ENCODE measurements at regions of chr3 and their contacts with region 1.

Region 1: DNA sequence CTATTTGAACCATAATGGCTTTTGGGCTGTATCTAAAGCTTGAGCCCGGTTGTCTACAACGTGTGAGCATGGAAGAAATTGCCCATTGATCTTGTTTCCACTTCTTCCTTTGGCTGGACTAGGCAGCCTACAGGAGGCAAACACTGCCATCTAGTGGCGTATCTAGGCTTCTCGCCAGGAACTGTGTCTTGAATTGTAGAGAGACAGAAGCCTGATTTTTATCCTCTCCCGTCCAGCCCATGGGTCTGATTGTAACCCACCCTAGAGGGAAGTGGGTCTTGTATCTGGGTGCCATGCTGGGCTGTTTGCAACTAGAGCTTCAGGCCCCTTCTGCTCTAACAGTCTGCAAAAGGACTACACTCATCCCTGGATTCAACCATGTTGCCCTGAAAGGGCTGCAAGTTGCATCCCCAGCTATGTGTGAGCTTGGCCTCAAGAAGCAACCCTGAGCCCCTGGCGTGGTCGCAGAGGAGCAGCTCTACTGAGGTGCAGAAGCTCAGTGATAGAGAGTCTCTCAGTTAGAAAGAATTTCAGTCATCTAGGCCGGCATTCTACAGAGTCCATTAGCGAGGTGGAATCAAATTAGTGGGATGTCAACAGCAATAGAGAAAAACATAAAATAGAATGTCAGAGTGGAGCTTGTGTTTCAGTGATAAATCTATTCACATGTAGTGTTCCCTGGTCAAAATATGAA is 170.2 kb upstream of the UMPS start:
- DNase-seq: peak; percentile 62
- H3K4me3 ChIP-seq: no peak overlapping the region
- H3K27ac ChIP-seq: no peak overlapping the region
- H3K27me3 ChIP-seq: peaks cover 13% of the 10 kb centered on the region
- CTCF ChIP-seq: peak; percentile 93

Region 2: GRCh38 chr3:124014366-124014942 is 545.6 kb before region 1 on chr3:
- CTCF ChIA-PET with region 1: interaction called, 17 read pairs
- POLR2A ChIA-PET with region 1: no interaction called
- DNase-seq: no peak
- H3K4me3 ChIP-seq: no peak overlapping the region
- H3K27ac ChIP-seq: no peak overlapping the region
- H3K27me3 ChIP-seq: peaks cover 10% of the 10 kb centered on the region
- CTCF ChIP-seq: no peak

Region 3: GRCh38 chr3:124467980-124468902 is 91.8 kb before region 1 on chr3:
- CTCF ChIA-PET with region 1: interaction called, 13 read pairs
- POLR2A ChIA-PET with region 1: no interaction called
- DNase-seq: no peak
- H3K4me3 ChIP-seq: no peak overlapping the region
- H3K27ac ChIP-seq: no peak overlapping the region
- H3K27me3 ChIP-seq: peaks cover 5% of the 10 kb centered on the region
- CTCF ChIP-seq: peak; percentile 99

Region 4: GRCh38 chr3:124700880-124701684 is 141.1 kb after region 1 on chr3:
- CTCF ChIA-PET with region 1: interaction called, 15 read pairs
- POLR2A ChIA-PET with region 1: no interaction called
- DNase-seq: peak; percentile 18
- H3K4me3 ChIP-seq: no peak overlapping the region
- H3K27ac ChIP-seq: no peak overlapping the region
- H3K27me3 ChIP-seq: no peaks in the 10 kb centered on the region
- CTCF ChIP-seq: no peak

Region 5: GRCh38 chr3:125585595-125586223 is 1025.7 kb after region 1 on chr3:
- CTCF ChIA-PET with region 1: interaction called, 14 read pairs
- POLR2A ChIA-PET with region 1: no interaction called
- DNase-seq: peak; percentile 66
- H3K4me3 ChIP-seq: no peak overlapping the region
- H3K27ac ChIP-seq: no peak overlapping the region
- H3K27me3 ChIP-seq: no peaks in the 10 kb centered on the region
- CTCF ChIP-seq: peak; percentile 94